ENCODE measurements at regions of chr19 and their contacts with region 1.

Region 1: DNA sequence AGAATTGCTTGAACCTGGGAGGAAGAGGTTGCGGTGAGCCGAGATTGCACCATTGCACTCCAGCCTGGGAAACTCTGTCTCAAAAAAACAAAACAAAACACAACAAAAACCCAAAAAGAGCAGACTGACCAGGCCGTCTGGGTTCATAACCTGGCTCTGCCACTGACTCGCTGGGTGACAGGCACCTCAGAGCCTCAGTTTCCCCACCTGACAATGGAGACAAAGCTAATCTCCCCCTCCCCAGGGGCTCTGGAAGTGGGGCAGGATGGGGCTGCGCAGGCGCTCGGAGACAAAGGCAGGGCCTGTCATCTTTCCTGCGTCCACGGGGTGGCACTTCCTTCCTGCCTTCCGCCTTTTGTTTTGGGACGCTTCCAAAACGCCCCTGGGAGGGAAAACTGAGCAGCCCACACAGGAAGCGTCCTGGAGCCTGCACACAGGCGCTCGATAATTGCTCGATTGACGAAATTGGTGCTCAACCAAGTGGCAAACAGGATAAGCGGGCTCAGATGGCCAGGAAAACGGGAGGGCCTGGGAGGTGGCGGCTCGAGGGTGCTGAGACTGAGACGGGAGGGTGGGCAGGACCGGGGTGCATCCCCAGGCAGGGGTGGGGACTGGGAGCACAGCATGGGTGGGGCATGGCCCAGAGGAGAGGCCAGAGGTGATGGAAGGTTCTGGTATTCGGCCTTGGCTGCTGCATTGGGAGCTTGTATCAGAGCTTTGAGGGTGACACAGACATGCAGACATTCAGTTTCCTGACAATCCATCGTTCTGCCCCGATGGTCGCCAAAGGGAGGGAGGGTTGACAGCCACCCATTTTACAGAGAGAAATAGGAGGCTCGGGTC is 17.8 kb downstream of the SPC24 start:
- DNase-seq: peak; percentile 69 to 76 (median 73)
- ATAC-seq: peak; percentile 67
- H3K4me3 ChIP-seq: no peak overlapping the region
- H3K4me1 ChIP-seq: peaks cover 22% of the 10 kb centered on the region
- CTCF ChIP-seq: peak; percentile 65

Region 2: DNA sequence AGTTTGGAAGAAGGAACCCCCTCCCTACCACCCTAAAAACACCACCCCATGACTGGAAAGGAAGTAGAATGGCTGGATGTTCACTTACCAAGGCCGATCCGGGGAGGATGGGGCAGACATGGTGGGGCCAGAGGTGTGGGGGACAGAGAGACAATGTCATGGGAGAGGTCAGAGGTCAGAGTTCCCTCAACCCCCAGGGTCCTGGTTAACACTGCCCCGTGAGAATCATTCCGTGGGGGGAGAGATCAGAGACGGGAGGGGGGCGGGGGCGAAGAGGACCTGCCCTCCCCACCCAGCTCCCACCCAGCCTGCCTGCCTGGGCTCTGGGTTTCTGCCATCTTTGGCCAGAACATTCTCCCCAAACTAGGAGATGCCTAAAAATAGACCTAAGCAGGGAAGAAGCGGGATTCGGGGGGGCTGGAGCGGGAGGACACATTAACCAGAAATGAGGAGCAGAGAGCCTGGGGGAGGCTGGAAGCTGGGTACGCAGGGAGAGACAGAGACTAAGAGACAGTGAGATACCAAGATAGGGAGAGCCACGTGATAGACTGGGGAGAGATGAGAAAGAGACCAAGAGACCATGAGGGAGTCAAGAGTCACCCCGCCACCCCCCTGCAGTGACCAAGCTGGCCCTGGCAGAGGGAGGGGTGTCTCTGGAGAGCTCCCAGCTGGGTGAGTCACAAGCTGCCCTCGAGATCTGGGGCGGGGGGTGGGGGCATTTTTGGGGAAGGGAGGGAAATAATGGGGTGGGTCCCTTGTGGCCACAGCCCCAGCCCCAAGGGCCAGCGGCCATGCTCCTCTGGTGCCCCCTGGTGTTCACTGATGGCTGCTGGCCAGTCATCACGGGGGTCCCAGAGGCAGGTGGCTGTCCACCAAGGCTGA is 65.7 kb after region 1 on chr19:
- intact Hi-C with region 1: loop called (anchors 2 to 5 kb)
- DNase-seq: peak; percentile 70 to 74 (median 71)
- ATAC-seq: peak; percentile 58
- H3K4me3 ChIP-seq: no peak overlapping the region
- H3K4me1 ChIP-seq: peaks cover under 1% of the 10 kb centered on the region
- CTCF ChIP-seq: peak; percentile 58

Measured in mucosa of descending colon (tissue), 3 donors.